Naive thymus-derived CD4-positive, alpha-beta T cell (primary cell): ENCODE measurements at regions of chr17 and their contacts with region 1.

Region 1: GRCh38 chr17:75749545-75750389 is 15.2 kb downstream of the GALK1 start:
- DNase-seq: peak; percentile 65 to 92 (median 82)
- ATAC-seq: peak; percentile 84
- H3K4me3 ChIP-seq: no peak overlapping the region
- H3K4me3 Mint-ChIP-seq: peak overlapping the region in 2 of 10 donors; percentile 25 to 44
- H3K27ac ChIP-seq: no peak overlapping the region
- H3K27ac Mint-ChIP-seq: peak overlapping the region in 2 of 9 donors; percentile 21 to 55
- H3K4me1 ChIP-seq: peaks cover 5 to 14% of the 10 kb centered on the region in 2 donors
- H3K4me1 Mint-ChIP-seq: peaks cover 9 to 21% (median 14%) of the 10 kb centered on the region in 7 donors
- H3K27me3 ChIP-seq: no peaks in the 10 kb centered on the region
- H3K27me3 Mint-ChIP-seq: peaks cover 0 to 5% (median 0%) of the 10 kb centered on the region in 5 donors

Region 2: GRCh38 chr17:75371339-75371738 is 378.4 kb before region 1 on chr17:
- CTCF ChIA-PET with region 1: no interaction called
- POLR2A ChIA-PET with region 1: no interaction called
- intact Hi-C with region 1: no loop called
- DNase-seq: peak in 1 of 9 donors; percentile 17
- ATAC-seq: peak; percentile 89
- H3K4me3 ChIP-seq: no peak overlapping the region
- H3K4me3 Mint-ChIP-seq: peak overlapping the region in 8 of 10 donors; percentile 17 to 75 (median 58)
- H3K27ac ChIP-seq: no peak overlapping the region
- H3K27ac Mint-ChIP-seq: peak overlapping the region in 8 of 9 donors; percentile 2 to 68 (median 38)
- H3K4me1 ChIP-seq: peaks cover 41 to 45% of the 10 kb centered on the region in 2 donors
- H3K4me1 Mint-ChIP-seq: peaks cover 60 to 85% (median 76%) of the 10 kb centered on the region in 7 donors
- H3K27me3 ChIP-seq: no peaks in the 10 kb centered on the region
- H3K27me3 Mint-ChIP-seq: no peaks in the 10 kb centered on the region

Region 3: DNA sequence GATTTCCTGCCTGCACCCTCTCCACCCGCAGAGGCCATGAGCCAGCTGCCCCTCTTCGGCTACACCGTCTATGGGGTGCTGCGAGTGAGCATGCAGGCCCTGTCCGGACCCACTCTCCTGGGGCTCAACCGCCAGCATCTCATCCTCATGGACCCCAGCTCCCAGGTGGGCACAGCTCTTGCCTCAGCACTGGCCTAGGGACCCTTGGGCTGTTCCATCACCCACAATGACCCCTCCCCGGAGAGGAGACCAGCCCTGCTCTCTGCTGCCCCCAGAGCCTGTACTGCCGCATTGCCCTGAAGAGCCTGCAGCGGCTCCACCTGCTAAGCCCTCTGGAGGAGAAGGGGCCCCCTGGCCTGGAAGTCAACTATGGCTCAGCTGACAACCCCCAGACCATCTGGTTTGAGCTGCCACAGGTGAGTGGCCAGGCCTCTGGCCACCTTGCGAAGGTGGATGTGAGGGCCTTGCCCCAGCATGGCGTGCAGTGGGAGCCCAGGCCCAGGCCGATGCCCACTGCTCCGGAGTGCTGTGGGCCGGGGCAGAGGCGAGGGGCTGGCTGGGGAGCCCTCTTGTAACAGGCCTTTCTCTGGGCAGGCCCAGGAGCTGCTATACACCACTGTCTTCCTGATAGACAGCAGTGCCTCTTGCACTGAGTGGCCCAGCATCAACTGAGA is 123.8 kb before region 1 on chr17:
- CTCF ChIA-PET with region 1: interaction called, 106 read pairs
- POLR2A ChIA-PET with region 1: interaction called, 3 read pairs
- intact Hi-C with region 1: no loop called
- DNase-seq: peak in 2 of 9 donors; percentile 13 to 15
- ATAC-seq: peak; percentile 66
- H3K4me3 ChIP-seq: no peak overlapping the region
- H3K4me3 Mint-ChIP-seq: no peak overlapping the region
- H3K27ac ChIP-seq: no peak overlapping the region
- H3K27ac Mint-ChIP-seq: peak overlapping the region in 1 of 9 donors; percentile 86
- H3K4me1 ChIP-seq: no peaks in the 10 kb centered on the region
- H3K4me1 Mint-ChIP-seq: peaks cover 0 to 5% (median 0%) of the 10 kb centered on the region in 7 donors
- H3K27me3 ChIP-seq: no peaks in the 10 kb centered on the region
- H3K27me3 Mint-ChIP-seq: no peaks in the 10 kb centered on the region

Region 4: DNA sequence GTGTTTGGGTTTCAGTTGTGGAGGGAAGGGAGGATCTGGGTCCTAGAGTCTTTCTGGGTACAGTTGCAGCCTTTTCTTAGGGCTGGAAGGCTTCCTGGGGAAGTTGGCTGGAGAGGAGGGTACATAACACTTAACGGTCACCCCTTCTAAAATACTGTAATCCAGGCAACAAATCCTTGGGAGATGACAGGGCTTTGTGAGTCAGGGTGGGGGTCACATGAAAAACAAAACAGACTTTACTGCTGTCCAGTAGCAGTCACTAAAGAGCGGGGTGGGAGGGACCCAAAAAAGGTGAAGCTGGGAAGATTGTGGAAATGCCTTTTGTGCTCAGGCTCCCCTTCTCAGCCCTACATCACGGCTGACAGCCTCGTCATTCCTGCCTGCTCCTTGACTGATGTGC is 76.3 kb before region 1 on chr17:
- CTCF ChIA-PET with region 1: interaction called, 97 read pairs
- POLR2A ChIA-PET with region 1: interaction called, 4 read pairs
- intact Hi-C with region 1: loop called (anchors 1 kb)
- DNase-seq: no peak
- ATAC-seq: no peak
- H3K4me3 ChIP-seq: no peak overlapping the region
- H3K4me3 Mint-ChIP-seq: no peak overlapping the region
- H3K27ac ChIP-seq: no peak overlapping the region
- H3K27ac Mint-ChIP-seq: no peak overlapping the region
- H3K4me1 ChIP-seq: peaks cover 0 to 8% of the 10 kb centered on the region in 2 donors
- H3K4me1 Mint-ChIP-seq: peaks cover 11 to 25% (median 20%) of the 10 kb centered on the region in 7 donors
- H3K27me3 ChIP-seq: no peaks in the 10 kb centered on the region
- H3K27me3 Mint-ChIP-seq: no peaks in the 10 kb centered on the region

Region 5: GRCh38 chr17:75738218-75738802 is 11.5 kb before region 1 on chr17:
- CTCF ChIA-PET with region 1: interaction called, 10 read pairs
- POLR2A ChIA-PET with region 1: interaction called, 3 read pairs
- intact Hi-C with region 1: loop called in 1 of 2 experiments (anchors 1 kb)
- DNase-seq: no peak
- ATAC-seq: peak; percentile 89
- H3K4me3 ChIP-seq: no peak overlapping the region
- H3K4me3 Mint-ChIP-seq: peak overlapping the region in 1 of 10 donors; percentile 44
- H3K27ac ChIP-seq: no peak overlapping the region
- H3K27ac Mint-ChIP-seq: peak overlapping the region in 2 of 9 donors; percentile 40 to 84
- H3K4me1 ChIP-seq: no peaks in the 10 kb centered on the region
- H3K4me1 Mint-ChIP-seq: peaks cover 0 to 10% (median 4%) of the 10 kb centered on the region in 7 donors
- H3K27me3 ChIP-seq: no peaks in the 10 kb centered on the region
- H3K27me3 Mint-ChIP-seq: no peaks in the 10 kb centered on the region

Region 6: DNA sequence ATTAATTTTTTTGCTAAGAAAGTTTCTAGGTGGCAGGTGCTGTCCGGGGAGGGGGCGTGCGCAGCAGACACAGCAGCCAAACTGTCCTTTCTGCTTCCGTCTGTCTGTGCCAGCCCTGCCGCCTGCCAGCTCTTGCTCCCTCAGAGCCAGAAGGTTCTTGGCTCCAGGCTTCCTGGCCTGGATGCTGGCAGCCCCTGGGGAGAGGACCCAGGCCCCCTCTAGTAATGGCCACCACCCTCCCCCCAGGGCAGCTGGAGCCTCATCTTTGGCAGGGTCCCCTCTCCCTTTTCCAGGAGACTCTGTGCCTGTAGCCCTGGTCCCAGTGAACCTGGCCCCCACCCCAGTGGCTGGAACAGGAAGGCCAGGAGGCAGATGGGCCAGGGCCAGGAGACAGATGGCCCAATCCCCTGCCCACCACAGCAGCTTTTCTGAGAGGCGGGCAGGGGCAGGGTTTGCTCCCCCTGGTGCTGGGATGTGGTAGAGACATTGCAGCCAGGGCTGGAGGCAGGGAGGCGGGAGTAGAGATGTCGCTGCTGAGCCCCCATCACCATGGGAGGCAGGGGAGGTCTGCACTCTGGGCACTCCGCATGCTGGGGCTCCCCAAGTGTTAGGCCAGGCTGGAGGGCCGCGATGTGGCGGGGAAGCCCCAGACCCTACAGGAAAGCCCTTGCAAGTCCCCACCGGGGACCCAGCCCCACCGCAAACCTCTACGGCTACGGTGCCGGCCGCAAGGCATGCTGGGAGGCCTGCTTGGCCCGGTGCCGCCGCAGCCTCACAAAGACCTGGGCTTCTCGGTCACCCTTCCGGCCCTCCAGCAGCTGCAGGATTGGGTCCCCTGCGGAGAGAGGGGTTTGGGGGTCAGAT is 77.7 kb after region 1 on chr17:
- CTCF ChIA-PET with region 1: interaction called, 16 read pairs
- POLR2A ChIA-PET with region 1: interaction called, 6 read pairs
- intact Hi-C with region 1: loop called in 1 of 2 experiments (anchors 1 kb)
- DNase-seq: peak; percentile 41 to 66 (median 61)
- ATAC-seq: peak; percentile 76
- H3K4me3 ChIP-seq: peak overlapping the region; percentile 30
- H3K4me3 Mint-ChIP-seq: peak overlapping the region; percentile 37 to 74 (median 56)
- H3K27ac ChIP-seq: peak overlapping the region; percentile 67
- H3K27ac Mint-ChIP-seq: peak overlapping the region; percentile 6 to 91 (median 76)
- H3K4me1 ChIP-seq: peaks cover 8% of the 10 kb centered on the region in 2 donors
- H3K4me1 Mint-ChIP-seq: peaks cover 5 to 16% (median 11%) of the 10 kb centered on the region in 7 donors
- H3K27me3 ChIP-seq: no peaks in the 10 kb centered on the region
- H3K27me3 Mint-ChIP-seq: no peaks in the 10 kb centered on the region

Region 7: DNA sequence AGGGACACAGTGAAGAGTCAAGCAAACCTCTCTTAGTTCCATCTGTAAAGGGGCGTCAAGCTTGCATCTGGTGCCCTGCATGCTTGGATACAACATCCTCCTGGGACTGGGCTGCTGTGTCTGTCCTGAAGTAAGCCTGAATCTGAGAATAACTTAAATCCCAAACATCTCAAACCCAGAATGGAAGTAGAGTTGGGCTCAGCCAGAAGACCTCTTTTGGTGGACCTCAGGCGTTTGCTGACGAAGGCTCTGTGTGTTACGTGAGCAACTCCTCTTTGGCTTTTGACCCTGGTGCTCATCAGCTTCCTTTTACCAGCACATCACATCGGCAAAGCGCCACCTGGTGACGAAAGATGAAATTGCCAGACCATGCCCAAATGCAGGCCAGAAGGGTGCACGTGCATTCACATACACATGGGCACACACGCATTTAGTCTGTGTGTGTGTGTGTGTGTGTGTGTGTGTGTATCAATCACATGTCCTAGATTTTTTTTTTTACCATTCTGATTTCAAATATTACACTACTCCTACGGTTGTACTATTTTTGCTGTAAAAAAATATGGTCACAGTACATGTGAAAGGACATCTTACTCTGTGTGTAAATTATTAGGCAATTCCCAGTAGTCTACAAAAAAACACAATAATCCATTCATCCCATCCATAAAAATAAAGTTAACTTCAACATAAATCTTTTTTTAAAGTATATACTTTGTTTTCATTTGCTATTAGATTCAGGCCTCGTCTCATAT is 432.4 kb after region 1 on chr17:
- CTCF ChIA-PET with region 1: no interaction called
- POLR2A ChIA-PET with region 1: no interaction called
- intact Hi-C with region 1: no loop called
- DNase-seq: peak; percentile 84 to 94 (median 89)
- ATAC-seq: peak; percentile 92
- H3K4me3 ChIP-seq: no peak overlapping the region
- H3K4me3 Mint-ChIP-seq: peak overlapping the region; percentile 11 to 77 (median 67)
- H3K27ac ChIP-seq: peak overlapping the region; percentile 52
- H3K27ac Mint-ChIP-seq: peak overlapping the region; percentile 91 to 99 (median 96)
- H3K4me1 ChIP-seq: peaks cover 33 to 63% of the 10 kb centered on the region in 2 donors
- H3K4me1 Mint-ChIP-seq: peaks cover 33 to 78% (median 61%) of the 10 kb centered on the region in 7 donors
- H3K27me3 ChIP-seq: no peaks in the 10 kb centered on the region
- H3K27me3 Mint-ChIP-seq: no peaks in the 10 kb centered on the region